Natural killer cell (primary cell): ENCODE measurements at regions of chr17 and their contacts with region 1.

Region 1: GRCh38 chr17:43388359-43389045 is 10.3 kb upstream of the ARL4D start:
- DNase-seq: peak; percentile 94 to 95
- ATAC-seq: peak; percentile 70 to 85 (median 74)
- H3K4me3 ChIP-seq: peak overlapping the region; percentile 88
- H3K4me3 Mint-ChIP-seq: peak overlapping the region; percentile 100
- H3K27ac ChIP-seq: peak overlapping the region; percentile 99
- H3K27ac Mint-ChIP-seq: peak overlapping the region; percentile 98 to 99
- H3K4me1 ChIP-seq: peaks cover 26% of the 10 kb centered on the region
- H3K4me1 Mint-ChIP-seq: peaks cover 35 to 41% of the 10 kb centered on the region in 2 donors
- H3K27me3 ChIP-seq: no peaks in the 10 kb centered on the region
- H3K27me3 Mint-ChIP-seq: no peaks in the 10 kb centered on the region
- CTCF ChIP-seq: no peak

Region 2: DNA sequence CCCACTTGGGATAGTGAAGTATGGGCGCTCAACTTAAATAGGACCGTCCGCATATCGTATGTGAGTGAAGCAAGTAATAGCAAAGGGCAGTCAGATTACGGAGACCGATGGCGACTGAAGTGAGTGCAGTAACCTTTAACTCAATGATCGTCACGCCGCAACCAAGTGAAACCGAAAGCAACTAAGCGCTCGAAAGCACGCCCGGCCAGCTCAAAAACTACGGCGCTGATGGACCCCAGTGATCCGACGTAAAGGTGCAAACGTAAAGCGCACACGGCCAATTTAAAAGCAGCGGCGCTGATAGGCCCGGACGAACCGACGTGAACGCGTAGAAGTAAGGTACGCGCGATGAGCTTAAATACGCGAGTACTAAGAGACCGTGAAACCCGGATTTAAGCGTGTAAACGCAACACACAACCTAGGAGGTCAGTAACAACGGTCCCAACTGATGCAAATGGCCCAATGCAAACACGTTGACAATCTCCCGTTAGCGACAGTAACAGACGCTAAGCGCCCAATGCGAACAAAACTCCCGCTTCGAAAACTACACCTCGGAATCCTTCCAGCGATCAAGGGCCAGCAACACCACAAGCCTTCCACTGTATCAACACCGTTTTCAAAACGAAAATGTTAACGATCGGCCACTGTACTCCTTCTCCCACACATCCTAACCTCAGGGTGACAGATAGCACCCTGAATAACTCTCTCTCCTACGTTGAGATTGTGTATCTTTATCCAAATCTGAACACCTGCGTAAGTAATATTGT is 27.6 kb before region 1 on chr17:
- intact Hi-C with region 1: loop called (anchors 1 kb)
- DNase-seq: peak; percentile 77 to 95
- ATAC-seq: peak in 2 of 3 donors; percentile 73 to 75
- H3K4me3 ChIP-seq: peak overlapping the region; percentile 54
- H3K4me3 Mint-ChIP-seq: peak overlapping the region; percentile 91
- H3K27ac ChIP-seq: peak overlapping the region; percentile 98
- H3K27ac Mint-ChIP-seq: peak overlapping the region; percentile 98 to 99
- H3K4me1 ChIP-seq: peaks cover 10% of the 10 kb centered on the region
- H3K4me1 Mint-ChIP-seq: peaks cover 29% of the 10 kb centered on the region in 2 donors
- H3K27me3 ChIP-seq: no peaks in the 10 kb centered on the region
- H3K27me3 Mint-ChIP-seq: peaks cover 0 to 3% of the 10 kb centered on the region in 2 donors
- CTCF ChIP-seq: no peak

Region 3: GRCh38 chr17:43367737-43368242 is 20.7 kb before region 1 on chr17:
- intact Hi-C with region 1: loop called (anchors 1 kb)
- DNase-seq: peak in 1 of 2 donors; percentile 82
- ATAC-seq: peak; percentile 44 to 64 (median 62)
- H3K4me3 ChIP-seq: peak overlapping the region; percentile 57
- H3K4me3 Mint-ChIP-seq: peak overlapping the region; percentile 87
- H3K27ac ChIP-seq: peak overlapping the region; percentile 99
- H3K27ac Mint-ChIP-seq: peak overlapping the region; percentile 97 to 100
- H3K4me1 ChIP-seq: peaks cover 38% of the 10 kb centered on the region
- H3K4me1 Mint-ChIP-seq: peaks cover 27 to 29% of the 10 kb centered on the region in 2 donors
- H3K27me3 ChIP-seq: no peaks in the 10 kb centered on the region
- H3K27me3 Mint-ChIP-seq: no peaks in the 10 kb centered on the region
- CTCF ChIP-seq: no peak